CD4-positive, alpha-beta memory T cell (primary cell): ENCODE measurements at regions of chr2 and their contacts with region 1.

Region 1: GRCh38 chr2:222690564-222691200 is 19.2 kb downstream of the MOGAT1 start:
- DNase-seq: peak; percentile 62 to 65 (median 64)
- H3K4me3 ChIP-seq: no peak overlapping the region
- H3K4me3 Mint-ChIP-seq: no peak overlapping the region
- H3K27ac ChIP-seq: no peak overlapping the region
- H3K27ac Mint-ChIP-seq: no peak overlapping the region
- H3K4me1 ChIP-seq: no peaks in the 10 kb centered on the region
- H3K4me1 Mint-ChIP-seq: peaks cover 11 to 19% (median 17%) of the 10 kb centered on the region in 4 donors
- H3K27me3 ChIP-seq: no peaks in the 10 kb centered on the region
- H3K27me3 Mint-ChIP-seq: peaks cover 4 to 10% of the 10 kb centered on the region in 2 donors

Region 2: GRCh38 chr2:222655787-222656525 is 34.7 kb before region 1 on chr2 and contains the start of gene FARSB:
- CTCF ChIA-PET with region 1: interaction called, 4 read pairs
- POLR2A ChIA-PET with region 1: no interaction called
- intact Hi-C with region 1: loop called (anchors 2 kb)
- DNase-seq: peak; percentile 94 to 97 (median 96)
- H3K4me3 ChIP-seq: peak within 1 kb of the TSS; percentile 84 to 99
- H3K4me3 Mint-ChIP-seq: peak within 1 kb of the TSS; percentile 94 to 99 (median 96)
- H3K27ac ChIP-seq: peak within 1 kb of the TSS; percentile 91
- H3K27ac Mint-ChIP-seq: peak within 1 kb of the TSS; percentile 99 to 100 (median 100)
- H3K4me1 ChIP-seq: peaks cover 41% of the 10 kb centered on the region
- H3K4me1 Mint-ChIP-seq: peaks cover 24 to 57% (median 40%) of the 10 kb centered on the region in 4 donors
- H3K27me3 ChIP-seq: no peaks in the 10 kb centered on the region
- H3K27me3 Mint-ChIP-seq: no peaks in the 10 kb centered on the region
- total RNA-seq, gene FARSB: 11.2 to 11.8 TPM

Region 3: DNA sequence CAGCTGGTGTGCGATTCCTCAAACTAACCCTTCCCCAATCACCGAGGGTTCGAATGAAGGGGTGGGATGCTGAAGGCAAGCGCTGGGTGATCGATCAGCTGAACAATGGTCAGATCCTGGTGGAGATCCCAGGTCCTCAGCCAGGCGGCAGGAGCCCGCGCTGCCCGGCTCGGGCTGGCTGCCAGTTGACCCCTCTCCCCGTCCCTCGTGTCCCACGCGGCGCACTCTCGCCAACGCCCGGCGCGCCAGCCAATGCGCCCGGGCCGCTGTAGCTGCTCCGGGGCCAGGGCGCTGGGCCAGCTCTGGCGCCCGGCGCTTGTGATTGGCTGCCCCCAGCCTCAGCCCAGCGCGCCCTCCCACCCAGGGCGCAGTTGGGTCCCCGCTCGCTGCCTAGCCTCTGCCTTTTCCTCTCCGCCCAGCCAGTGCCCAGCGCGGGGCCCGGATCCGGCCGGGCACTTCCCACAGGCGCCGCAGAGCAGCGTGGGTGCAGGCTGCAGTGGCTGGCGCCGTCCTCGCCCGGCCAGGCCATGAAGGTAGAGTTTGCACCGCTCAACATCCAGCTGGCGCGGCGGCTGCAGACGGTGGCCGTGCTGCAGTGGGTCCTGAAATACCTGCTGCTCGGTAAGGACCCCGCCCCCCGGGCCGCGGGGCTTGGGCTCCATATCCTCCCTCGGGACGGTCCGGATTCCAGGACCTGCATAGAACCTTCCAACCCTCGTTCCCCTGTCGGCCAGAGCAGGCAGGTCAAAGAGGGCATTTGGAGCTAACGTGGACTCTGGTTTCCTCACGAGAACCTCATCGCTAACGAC is 19.2 kb before region 1 on chr2 and contains the start of gene MOGAT1:
- CTCF ChIA-PET with region 1: interaction called, 10 read pairs
- POLR2A ChIA-PET with region 1: no interaction called
- intact Hi-C with region 1: no loop called
- DNase-seq: no peak
- H3K4me3 ChIP-seq: no peak within 1 kb of the TSS
- H3K4me3 Mint-ChIP-seq: peak within 1 kb of the TSS; percentile 17 to 78 (median 58)
- H3K27ac ChIP-seq: no peak within 1 kb of the TSS
- H3K27ac Mint-ChIP-seq: no peak within 1 kb of the TSS
- H3K4me1 ChIP-seq: peaks cover 9% of the 10 kb centered on the region
- H3K4me1 Mint-ChIP-seq: peaks cover 4 to 10% (median 8%) of the 10 kb centered on the region in 4 donors
- H3K27me3 ChIP-seq: no peaks in the 10 kb centered on the region
- H3K27me3 Mint-ChIP-seq: peaks cover 33 to 48% of the 10 kb centered on the region in 2 donors
- total RNA-seq, gene MOGAT1: not detected

Region 4: GRCh38 chr2:222707689-222708525 is 17.2 kb after region 1 on chr2:
- CTCF ChIA-PET with region 1: interaction called, 11 read pairs
- POLR2A ChIA-PET with region 1: no interaction called
- intact Hi-C with region 1: no loop called
- DNase-seq: peak; percentile 53 to 64 (median 59)
- H3K4me3 ChIP-seq: no peak overlapping the region
- H3K4me3 Mint-ChIP-seq: no peak overlapping the region
- H3K27ac ChIP-seq: no peak overlapping the region
- H3K27ac Mint-ChIP-seq: peak overlapping the region in 1 of 7 donors; percentile 48
- H3K4me1 ChIP-seq: peaks cover 6% of the 10 kb centered on the region
- H3K4me1 Mint-ChIP-seq: no peaks in the 10 kb centered on the region
- H3K27me3 ChIP-seq: no peaks in the 10 kb centered on the region
- H3K27me3 Mint-ChIP-seq: peaks cover 29 to 36% of the 10 kb centered on the region in 2 donors

Region 5: DNA sequence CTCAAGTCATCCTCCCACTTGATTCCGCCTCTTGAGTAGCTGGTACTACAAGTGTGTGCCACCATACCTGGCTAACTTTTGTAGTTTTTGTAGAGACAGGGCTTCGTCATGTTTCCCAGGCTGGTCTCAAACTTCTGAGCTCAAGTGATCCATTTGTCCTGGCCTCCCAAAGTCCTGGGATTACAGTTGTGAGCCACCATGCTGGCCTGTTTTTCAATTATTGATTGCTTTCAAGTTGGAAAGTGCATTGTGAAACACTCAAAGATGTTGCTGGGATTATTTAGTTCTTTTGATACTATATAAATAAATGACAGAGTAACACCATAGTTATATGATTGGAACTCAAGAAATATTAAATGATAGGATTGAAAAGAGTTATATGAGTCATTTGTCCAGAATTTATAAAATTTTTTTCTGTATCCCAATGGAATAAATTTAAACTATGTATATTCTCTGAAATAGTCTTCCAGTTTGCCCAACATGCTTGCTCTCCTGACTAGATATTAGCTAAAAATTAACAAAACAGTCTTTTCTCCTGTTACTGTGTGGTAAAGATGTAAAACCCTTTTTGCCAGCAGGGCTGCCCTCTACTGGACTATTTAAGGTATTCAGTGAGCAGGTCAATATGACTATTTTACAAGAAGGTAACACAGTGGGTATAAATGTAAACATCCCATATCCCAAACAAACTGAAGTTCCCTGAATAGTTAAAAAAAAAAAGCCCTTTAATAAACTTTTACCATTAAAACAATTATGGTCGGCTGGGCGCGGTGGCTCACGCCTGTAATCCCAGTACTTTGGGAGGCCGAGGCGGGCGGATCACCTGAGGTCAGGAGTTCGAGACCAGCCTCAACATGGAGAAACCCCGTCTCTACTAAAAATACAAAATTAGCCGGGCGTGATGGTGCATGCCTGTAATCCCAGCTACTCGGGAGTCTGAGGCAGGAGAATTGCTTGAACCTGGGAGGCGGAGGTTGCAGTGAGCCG is 212.8 kb after region 1 on chr2:
- CTCF ChIA-PET with region 1: interaction called, 12 read pairs
- POLR2A ChIA-PET with region 1: no interaction called
- intact Hi-C with region 1: loop called (anchors 1 kb)
- DNase-seq: peak in 4 of 5 donors; percentile 29 to 40 (median 36)
- H3K4me3 ChIP-seq: no peak overlapping the region
- H3K4me3 Mint-ChIP-seq: no peak overlapping the region
- H3K27ac ChIP-seq: no peak overlapping the region
- H3K27ac Mint-ChIP-seq: peak overlapping the region in 1 of 7 donors; percentile 31
- H3K4me1 ChIP-seq: no peaks in the 10 kb centered on the region
- H3K4me1 Mint-ChIP-seq: peaks cover 11 to 16% (median 13%) of the 10 kb centered on the region in 4 donors
- H3K27me3 ChIP-seq: no peaks in the 10 kb centered on the region
- H3K27me3 Mint-ChIP-seq: no peaks in the 10 kb centered on the region